Esophagus muscularis mucosa (tissue), 4 donors: ENCODE measurements at regions of chr1 and their contacts with region 1.

Region 1: GRCh38 chr1:245156081-245156735 is 1.4 kb downstream of the KIF26B start:
- DNase-seq: no peak
- H3K4me3 ChIP-seq: peak overlapping the region; percentile 62 to 71 (median 66)
- H3K27ac ChIP-seq: no peak overlapping the region
- H3K4me1 ChIP-seq: peaks cover 38 to 43% (median 42%) of the 10 kb centered on the region in 4 donors
- H3K27me3 ChIP-seq: peaks cover 0 to 47% (median 12%) of the 10 kb centered on the region in 4 donors
- CTCF ChIP-seq: peak; percentile 62 to 90 (median 70)
- EP300 ChIP-seq: no peak
- POLR2A ChIP-seq: no peak

Region 2: DNA sequence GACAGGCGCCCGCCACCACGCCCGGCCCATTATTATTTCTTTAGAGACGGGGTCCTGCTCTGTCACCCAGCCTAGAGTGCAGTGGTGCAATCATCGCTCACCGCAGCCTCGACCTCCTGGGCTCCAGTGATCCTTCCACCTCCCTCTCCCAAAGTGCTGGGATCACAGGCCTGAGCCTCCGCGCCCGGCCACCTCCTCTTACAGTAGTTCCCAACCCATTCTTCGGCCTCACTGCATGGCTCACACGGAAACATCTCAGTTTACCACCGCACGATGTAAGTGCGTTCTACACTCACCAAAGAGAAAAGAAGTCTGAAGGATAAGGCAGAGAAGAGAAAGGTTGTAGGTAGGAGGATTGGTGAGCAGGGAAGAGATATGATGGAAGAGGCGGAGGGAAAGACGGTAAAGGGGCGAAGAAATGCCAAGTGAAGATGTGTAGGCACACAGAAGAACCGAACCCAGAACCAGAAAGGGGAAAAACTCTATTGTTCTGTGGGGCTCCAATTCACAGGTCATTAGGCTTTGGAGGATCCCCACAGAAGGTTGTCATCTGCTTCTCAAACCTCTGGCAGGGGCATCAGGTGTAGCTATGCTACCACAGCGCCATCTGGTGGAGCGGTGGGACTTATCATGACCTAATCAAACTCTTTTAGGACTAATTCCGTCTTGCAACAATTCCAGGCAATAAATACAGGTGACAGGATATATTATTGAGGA is 846.7 kb after region 1 on chr1:
- intact Hi-C with region 1: loop called (anchors 2 kb)
- DNase-seq: peak; percentile 96
- H3K4me3 ChIP-seq: no peak overlapping the region
- H3K27ac ChIP-seq: no peak overlapping the region
- H3K4me1 ChIP-seq: peaks cover 8 to 25% (median 18%) of the 10 kb centered on the region in 4 donors
- H3K27me3 ChIP-seq: no peaks in the 10 kb centered on the region
- CTCF ChIP-seq: peak; percentile 82 to 90 (median 88)
- EP300 ChIP-seq: no peak
- POLR2A ChIP-seq: no peak

Region 3: DNA sequence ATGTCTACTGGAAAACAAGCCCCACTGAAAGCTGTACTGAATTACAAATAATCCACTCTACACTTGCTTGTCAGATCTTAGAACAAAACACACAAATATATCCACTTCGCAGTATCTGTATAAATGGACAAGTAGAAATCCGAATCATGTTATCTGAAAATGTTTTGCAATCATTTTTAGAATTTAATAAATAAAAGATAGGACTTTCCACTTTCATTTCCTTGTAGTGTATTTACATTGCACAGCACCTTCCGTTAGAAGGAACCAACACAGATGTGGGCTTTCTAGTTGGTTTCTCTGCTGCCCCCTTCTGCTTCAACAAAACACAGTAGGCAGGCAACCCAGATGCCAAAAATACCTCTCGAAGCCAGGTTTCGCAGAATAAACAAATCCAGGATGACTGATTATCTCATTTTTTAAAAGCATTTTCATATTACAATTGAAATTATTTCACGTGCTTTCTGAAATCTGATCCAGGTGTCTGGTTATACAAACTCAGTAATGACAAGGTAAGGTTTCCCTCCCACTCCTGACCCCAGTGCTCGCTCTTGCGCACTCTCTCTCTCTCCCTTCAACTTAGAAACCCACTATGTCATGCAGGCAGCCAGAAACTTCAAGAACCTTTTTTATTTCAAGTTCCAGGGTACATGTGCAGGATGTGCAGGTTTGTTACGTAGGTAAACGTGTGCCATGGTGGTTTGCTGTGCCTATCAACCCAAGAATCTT is 961.0 kb after region 1 on chr1:
- intact Hi-C with region 1: loop called (anchors 10 kb)
- DNase-seq: no peak
- H3K4me3 ChIP-seq: no peak overlapping the region
- H3K27ac ChIP-seq: no peak overlapping the region
- H3K4me1 ChIP-seq: peaks cover 0 to 34% (median 18%) of the 10 kb centered on the region in 4 donors
- H3K27me3 ChIP-seq: no peaks in the 10 kb centered on the region
- CTCF ChIP-seq: peak; percentile 50 to 59 (median 58)
- EP300 ChIP-seq: no peak
- POLR2A ChIP-seq: no peak

Region 4: GRCh38 chr1:246450611-246451251 is 1294.5 kb after region 1 on chr1:
- intact Hi-C with region 1: loop called (anchors 10 kb)
- DNase-seq: no peak
- H3K4me3 ChIP-seq: no peak overlapping the region
- H3K27ac ChIP-seq: no peak overlapping the region
- H3K4me1 ChIP-seq: peaks cover 5 to 58% (median 47%) of the 10 kb centered on the region in 4 donors
- H3K27me3 ChIP-seq: no peaks in the 10 kb centered on the region
- CTCF ChIP-seq: peak; percentile 55 to 75 (median 68)
- EP300 ChIP-seq: no peak
- POLR2A ChIP-seq: no peak

Region 5: GRCh38 chr1:246497331-246497915 is 1341.2 kb after region 1 on chr1:
- intact Hi-C with region 1: loop called (anchors 5 kb)
- DNase-seq: no peak
- H3K4me3 ChIP-seq: no peak overlapping the region
- H3K27ac ChIP-seq: no peak overlapping the region
- H3K4me1 ChIP-seq: peaks cover 1 to 5% (median 3%) of the 10 kb centered on the region in 4 donors
- H3K27me3 ChIP-seq: no peaks in the 10 kb centered on the region
- CTCF ChIP-seq: peak; percentile 68 to 79 (median 72)
- EP300 ChIP-seq: no peak
- POLR2A ChIP-seq: no peak

Region 6: GRCh38 chr1:246705368-246705767 is 1549.2 kb after region 1 on chr1:
- intact Hi-C with region 1: loop called (anchors 10 kb)
- DNase-seq: no peak
- H3K4me3 ChIP-seq: no peak overlapping the region
- H3K27ac ChIP-seq: no peak overlapping the region
- H3K4me1 ChIP-seq: no peaks in the 10 kb centered on the region
- H3K27me3 ChIP-seq: no peaks in the 10 kb centered on the region
- CTCF ChIP-seq: no peak
- EP300 ChIP-seq: no peak
- POLR2A ChIP-seq: no peak